ENCODE measurements at regions of chr19 and their contacts with region 1.

Region 1: DNA sequence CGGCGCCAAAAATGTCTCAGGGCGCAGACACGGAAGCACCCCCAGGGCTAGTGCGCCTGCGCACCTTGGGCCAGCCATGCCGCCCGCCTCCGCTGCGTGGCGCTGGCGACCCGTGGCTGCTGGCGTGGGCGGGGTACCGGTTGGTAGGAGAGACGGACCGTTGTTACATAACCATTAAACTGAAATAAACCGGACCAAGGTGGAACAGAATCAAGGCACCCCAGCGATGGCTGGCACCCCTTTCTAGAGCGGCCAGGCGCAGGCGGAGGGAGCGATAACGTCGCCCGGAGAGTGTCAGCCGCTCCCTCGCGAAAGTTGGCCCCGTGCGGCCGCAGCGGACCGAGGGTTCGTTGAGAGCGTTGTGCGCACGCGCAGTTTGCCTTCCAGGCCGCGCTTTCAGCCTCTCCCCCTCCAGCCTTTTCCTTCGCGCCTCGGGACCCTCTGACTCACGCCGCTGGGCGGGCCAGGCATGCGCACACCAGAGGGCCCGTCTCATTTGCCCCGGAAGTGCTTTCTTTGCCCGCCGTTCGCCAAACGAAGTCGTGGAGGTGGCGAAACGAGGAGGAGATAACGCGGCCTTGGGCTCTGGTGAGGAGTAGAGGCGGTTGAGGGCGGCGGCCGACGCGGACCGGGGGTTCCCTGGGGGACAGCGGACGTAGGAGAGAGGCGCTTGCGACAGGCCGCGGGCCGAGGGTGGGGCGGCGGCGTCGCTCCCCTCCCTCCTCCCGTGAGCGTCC is at the starts of genes PLEKHJ1 and SF3A2:
- DNase-seq: peak; percentile 97 to 99
- ATAC-seq: peak; percentile 88 to 90 (median 88)
- H3K4me3 ChIP-seq: peak within 1 kb of the TSS; percentile 97
- H3K27ac ChIP-seq: peak within 1 kb of the TSS; percentile 91
- H3K4me1 ChIP-seq: peaks cover 49% of the 10 kb centered on the region
- H3K27me3 ChIP-seq: no peaks in the 10 kb centered on the region
- CTCF ChIP-seq: peak; percentile 93
- total RNA-seq, gene PLEKHJ1: 54.9 to 65.5 (median 60.0) TPM
- total RNA-seq, gene SF3A2: 31.1 to 46.8 (median 40.2) TPM

Region 2: DNA sequence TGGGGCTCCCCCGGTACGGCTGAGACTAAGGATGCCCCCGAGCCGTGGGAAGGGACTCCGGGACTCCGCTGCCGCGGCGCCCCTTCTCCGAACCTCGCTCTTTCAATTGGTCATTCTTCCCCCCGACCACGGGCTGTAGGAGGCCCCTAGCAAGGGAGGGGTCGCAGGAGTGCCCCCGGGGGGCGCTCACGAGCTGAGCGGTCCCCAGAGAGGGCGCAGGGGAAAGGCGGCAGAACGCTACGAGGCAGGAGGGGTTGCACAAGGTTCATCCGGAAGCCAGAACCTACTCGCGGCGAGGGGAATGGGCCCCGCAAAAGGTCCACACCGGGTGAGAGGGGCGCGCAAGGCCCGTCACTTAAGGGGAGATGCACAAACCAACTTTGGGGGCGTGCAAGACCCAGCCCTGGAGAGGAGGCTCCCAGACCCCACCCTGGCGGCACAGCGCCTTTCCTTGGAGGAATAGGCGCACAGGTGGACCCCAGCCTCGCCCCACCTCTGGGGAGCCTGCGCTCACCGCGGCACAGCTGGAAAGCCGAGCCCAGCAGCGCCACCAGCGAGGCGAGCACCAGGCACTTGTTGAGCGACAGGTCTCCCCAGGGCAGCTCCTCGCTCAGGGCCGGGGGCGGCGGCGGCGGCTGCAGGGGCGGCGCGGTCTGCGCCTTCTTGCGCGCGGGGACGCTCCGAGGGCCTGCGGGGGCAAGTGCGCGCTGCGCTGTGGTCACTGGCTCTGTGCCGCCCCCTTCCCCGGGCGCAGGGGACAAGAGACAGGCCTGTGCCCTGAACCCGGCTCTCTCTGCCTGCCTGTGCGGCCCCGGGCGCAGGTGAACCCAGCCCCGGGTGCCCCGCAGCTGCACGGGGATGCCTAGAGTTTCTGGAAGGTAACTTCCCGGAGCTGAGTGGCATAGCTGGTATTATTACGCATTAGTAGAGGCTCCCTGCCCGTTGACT is 16.9 kb after region 1 on chr19:
- intact Hi-C with region 1: loop called in 1 of 2 experiments (anchors 2 kb)
- DNase-seq: no peak
- ATAC-seq: peak in 1 of 4 donors; percentile 1
- H3K4me3 ChIP-seq: peak overlapping the region; percentile 72
- H3K27ac ChIP-seq: peak overlapping the region; percentile 100
- H3K4me1 ChIP-seq: peaks cover 30% of the 10 kb centered on the region
- H3K27me3 ChIP-seq: peaks cover 0 to 13% (median 0%) of the 10 kb centered on the region in 3 donors
- CTCF ChIP-seq: no peak

Region 3: DNA sequence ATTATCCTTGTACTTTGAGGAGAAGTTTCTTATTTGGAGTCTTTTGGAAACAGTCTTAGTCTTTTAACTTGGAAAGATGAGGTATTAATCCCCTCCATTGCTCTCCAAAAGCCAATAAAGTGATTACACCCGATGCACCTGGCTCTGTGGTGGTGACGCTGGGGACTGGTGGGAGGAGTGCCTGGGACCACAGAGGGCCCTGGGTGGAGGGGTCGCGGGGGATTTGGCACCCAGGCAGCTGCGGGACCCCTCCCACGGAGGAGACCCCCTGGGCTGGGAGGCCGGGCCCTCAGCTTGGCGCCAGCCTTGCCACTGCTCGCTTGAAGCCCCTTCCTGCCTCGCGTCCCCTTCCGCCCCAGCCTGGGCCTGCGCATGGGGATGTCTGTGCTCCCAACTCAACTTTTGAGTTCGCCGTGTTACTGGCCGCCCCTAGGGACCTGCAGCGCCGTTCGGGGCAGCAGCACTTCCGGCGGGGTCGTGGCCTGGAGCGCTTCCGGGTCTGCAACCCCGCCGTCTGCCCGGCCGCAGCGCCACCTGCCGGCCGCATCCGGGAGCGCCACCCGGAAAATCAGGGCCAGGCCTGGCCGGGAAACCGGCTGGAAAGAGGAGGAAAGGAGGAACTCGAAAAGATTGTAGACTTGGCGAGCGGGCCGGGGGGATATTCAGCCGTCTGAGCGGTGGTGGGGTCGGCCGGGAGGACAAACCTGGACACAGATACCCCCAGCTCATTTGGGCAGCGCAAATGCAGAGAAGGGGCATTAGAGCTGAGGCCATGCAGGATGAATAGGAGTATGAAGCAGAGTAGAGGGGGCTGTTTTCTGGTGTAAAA is 37.1 kb after region 1 on chr19:
- intact Hi-C with region 1: loop called (anchors 2 kb)
- DNase-seq: peak; percentile 84 to 91
- ATAC-seq: peak; percentile 13 to 32 (median 20)
- H3K4me3 ChIP-seq: peak overlapping the region; percentile 97
- H3K27ac ChIP-seq: peak overlapping the region; percentile 99
- H3K4me1 ChIP-seq: peaks cover 49% of the 10 kb centered on the region
- H3K27me3 ChIP-seq: no peaks in the 10 kb centered on the region
- CTCF ChIP-seq: peak; percentile 95

Region 4: GRCh38 chr19:2315818-2316353 is 79.4 kb after region 1 on chr19:
- intact Hi-C with region 1: loop called in 1 of 2 experiments (anchors 10 kb)
- DNase-seq: peak; percentile 64 to 80
- ATAC-seq: peak; percentile 71 to 89 (median 81)
- H3K4me3 ChIP-seq: no peak overlapping the region
- H3K27ac ChIP-seq: no peak overlapping the region
- H3K4me1 ChIP-seq: no peaks in the 10 kb centered on the region
- H3K27me3 ChIP-seq: peaks cover 0 to 7% (median 0%) of the 10 kb centered on the region in 3 donors
- CTCF ChIP-seq: peak; percentile 45

Region 5: GRCh38 chr19:2328401-2329148 is 92.1 kb after region 1 on chr19 and contains the starts of genes LSM7 and SPPL2B:
- intact Hi-C with region 1: loop called in 1 of 2 experiments (anchors 5 kb)
- DNase-seq: peak; percentile 92 to 96
- ATAC-seq: peak; percentile 75 to 83 (median 78)
- H3K4me3 ChIP-seq: peak within 1 kb of the TSS; percentile 93
- H3K27ac ChIP-seq: peak within 1 kb of the TSS; percentile 84
- H3K4me1 ChIP-seq: peaks cover 49% of the 10 kb centered on the region
- H3K27me3 ChIP-seq: no peaks in the 10 kb centered on the region
- CTCF ChIP-seq: no peak
- total RNA-seq, gene LSM7: 42.2 to 89.8 (median 47.8) TPM
- total RNA-seq, gene SPPL2B: 21.1 to 38.0 (median 27.7) TPM

Region 6: DNA sequence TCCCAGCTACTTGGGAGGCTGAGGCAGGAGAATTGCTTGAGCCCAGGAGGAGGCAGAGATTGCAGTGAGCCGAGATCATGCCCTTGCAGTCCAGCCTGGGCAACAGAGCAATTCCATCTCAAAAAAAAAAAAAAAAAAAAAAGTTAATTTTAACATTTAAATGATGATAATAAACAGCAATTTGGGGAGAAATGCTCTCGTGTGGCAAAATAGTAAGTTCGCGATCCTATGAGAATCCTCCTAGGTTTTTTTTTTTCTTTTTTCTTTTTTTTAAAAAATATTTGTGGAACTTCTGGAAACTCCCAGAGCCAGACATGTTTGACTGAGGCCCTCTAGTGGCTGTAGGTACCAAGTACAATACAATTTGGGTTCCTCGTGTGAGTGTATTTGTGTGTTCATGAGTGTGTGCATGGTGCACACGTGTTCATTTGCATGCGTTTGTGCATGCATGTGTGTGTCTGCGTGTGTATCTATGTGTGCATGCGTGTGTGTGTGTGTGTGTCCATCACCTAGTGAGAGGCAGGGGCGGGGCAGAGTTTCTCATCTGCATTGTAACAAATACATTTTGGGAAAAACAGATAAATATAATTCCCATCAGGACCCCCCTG is 154.7 kb after region 1 on chr19:
- intact Hi-C with region 1: loop called in 1 of 2 experiments (anchors 5 kb)
- DNase-seq: no peak
- ATAC-seq: peak; percentile 64 to 80 (median 72)
- H3K4me3 ChIP-seq: no peak overlapping the region
- H3K27ac ChIP-seq: no peak overlapping the region
- H3K4me1 ChIP-seq: no peaks in the 10 kb centered on the region
- H3K27me3 ChIP-seq: peaks cover 0 to 5% (median 0%) of the 10 kb centered on the region in 3 donors
- CTCF ChIP-seq: peak; percentile 71

Measured in psoas muscle (tissue), 8 donors.